GM13977 (cell line): ENCODE measurements at regions of chrX and their contacts with region 1.

Region 1: GRCh38 chrX:57918750-57919436 is 8.6 kb upstream of the ZXDA start:
- DNase-seq: no peak
- CTCF ChIP-seq: peak; percentile 65

Region 2: GRCh38 chrX:56802921-56803849 is 1115.7 kb before region 1 on chrX:
- in situ Hi-C with region 1: loop called (anchors 25 kb)
- DNase-seq: peak; percentile 44
- CTCF ChIP-seq: peak; percentile 60

Region 3: DNA sequence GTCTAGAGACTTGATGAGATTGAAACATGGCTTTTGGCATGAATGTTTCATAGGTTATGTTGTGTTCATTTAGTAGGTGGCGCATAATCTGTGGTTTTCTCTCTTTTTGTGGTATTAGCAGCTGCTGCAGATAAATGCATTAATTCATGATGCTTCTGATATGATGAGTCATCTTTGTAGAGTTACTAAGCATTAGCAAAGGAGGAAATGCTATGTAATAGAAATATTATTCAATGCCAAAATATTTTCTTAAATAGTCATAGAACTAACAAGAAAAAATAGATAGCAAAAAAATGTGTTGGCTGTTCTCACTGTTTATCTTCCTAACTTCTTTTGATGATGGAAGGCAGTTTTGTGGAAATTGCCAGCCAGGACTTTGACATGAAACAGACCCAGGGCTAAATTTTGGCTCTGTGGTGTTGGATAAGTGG is 323.5 kb before region 1 on chrX:
- in situ Hi-C with region 1: loop called (anchors 25 kb)
- DNase-seq: no peak
- CTCF ChIP-seq: no peak

Region 4: DNA sequence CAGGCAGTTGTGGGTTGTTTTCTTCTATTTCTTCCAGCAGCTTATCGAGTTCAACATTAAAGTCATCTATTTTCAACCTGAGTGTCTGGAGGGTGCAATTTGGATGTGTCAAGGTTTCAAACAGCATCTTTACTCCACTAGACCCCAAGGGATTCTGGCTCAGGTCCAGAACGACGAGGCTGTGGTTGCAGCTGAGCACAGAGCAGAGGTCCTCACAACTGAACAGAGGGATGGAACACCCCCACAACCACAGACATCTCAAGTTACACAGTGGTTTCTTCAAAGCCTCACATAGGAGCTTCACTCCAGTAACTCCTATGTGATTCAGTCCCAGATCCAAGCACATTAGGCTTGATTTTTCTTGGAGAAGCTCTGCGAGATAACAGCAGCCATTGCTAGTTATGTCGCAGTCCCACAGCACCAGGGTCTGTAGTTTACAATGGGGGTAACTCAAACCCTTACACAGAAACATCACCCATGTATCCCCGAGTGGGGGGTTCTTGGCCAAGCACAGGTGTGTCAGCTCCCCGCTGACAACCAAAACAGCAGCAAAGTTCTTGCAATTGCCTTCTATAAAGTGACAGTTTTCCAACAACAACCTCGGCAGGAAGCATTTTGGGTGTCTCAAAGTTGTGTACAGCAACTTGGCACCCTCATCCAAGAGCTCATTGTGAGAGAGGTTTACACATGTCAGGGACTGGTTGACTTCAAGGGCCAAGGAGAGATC is 241.6 kb before region 1 on chrX:
- in situ Hi-C with region 1: no loop called
- DNase-seq: no peak
- CTCF ChIP-seq: no peak

Region 5: GRCh38 chrX:57821703-57822375 is 97.1 kb before region 1 on chrX:
- in situ Hi-C with region 1: loop called (anchors 25 kb)
- DNase-seq: peak; percentile 23
- CTCF ChIP-seq: peak; percentile 72